B cell (primary cell): ENCODE measurements at regions of chr3 and their contacts with region 1.

Region 1: GRCh38 chr3:16511681-16512434 is 1.6 kb downstream of the RFTN1 start:
- DNase-seq: peak; percentile 95
- ATAC-seq: peak; percentile 66
- H3K4me3 ChIP-seq: peak overlapping the region in 4 of 5 experiments; percentile 82 to 98 (median 91)
- H3K4me3 Mint-ChIP-seq: peak overlapping the region; percentile 74
- H3K27ac ChIP-seq: peak overlapping the region; percentile 89 to 97
- H3K27ac Mint-ChIP-seq: peak overlapping the region; percentile 71
- H3K4me1 ChIP-seq: peaks cover 80 to 87% of the 10 kb centered on the region in 2 donors
- H3K4me1 Mint-ChIP-seq: peaks cover 82% of the 10 kb centered on the region
- H3K27me3 ChIP-seq: no peaks in the 10 kb centered on the region
- H3K27me3 Mint-ChIP-seq: no peaks in the 10 kb centered on the region
- CTCF ChIP-seq: no peak

Region 2: GRCh38 chr3:15797642-15798303 is 714.1 kb before region 1 on chr3 and contains the start of gene ANKRD28:
- CTCF ChIA-PET with region 1: no interaction called
- POLR2A ChIA-PET with region 1: no interaction called
- intact Hi-C with region 1: loop called (anchors 2 kb)
- DNase-seq: peak; percentile 57
- ATAC-seq: no peak
- H3K4me3 ChIP-seq: peak within 1 kb of the TSS in 3 of 5 experiments; percentile 18 to 52 (median 50)
- H3K4me3 Mint-ChIP-seq: peak within 1 kb of the TSS; percentile 70
- H3K27ac ChIP-seq: peak within 1 kb of the TSS; percentile 47 to 91
- H3K27ac Mint-ChIP-seq: peak within 1 kb of the TSS; percentile 64
- H3K4me1 ChIP-seq: peaks cover 33 to 39% of the 10 kb centered on the region in 2 donors
- H3K4me1 Mint-ChIP-seq: peaks cover 68% of the 10 kb centered on the region
- H3K27me3 ChIP-seq: no peaks in the 10 kb centered on the region
- H3K27me3 Mint-ChIP-seq: no peaks in the 10 kb centered on the region
- CTCF ChIP-seq: no peak
- total RNA-seq, gene ANKRD28: 37.4 and 45.7 TPM in 2 replicates

Region 3: DNA sequence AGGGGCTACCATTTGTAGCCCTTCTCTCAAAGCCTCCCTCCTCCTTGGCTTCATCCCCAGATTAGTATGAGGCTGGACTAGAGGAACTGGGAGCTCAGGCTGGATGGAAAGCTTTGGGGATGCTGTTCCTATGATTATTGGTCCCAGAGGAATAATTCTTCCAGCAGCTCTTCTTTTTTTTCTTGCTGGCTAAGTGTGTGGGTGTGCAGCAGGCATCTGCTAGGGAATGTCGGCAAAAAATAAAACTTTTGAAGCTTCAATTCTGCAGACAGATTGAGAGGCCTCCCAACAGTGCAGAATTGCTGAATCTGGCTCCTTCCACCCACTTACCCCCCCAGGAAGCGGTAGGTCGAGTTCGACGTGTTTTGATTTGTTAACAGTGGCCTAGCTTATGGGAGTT is 575.5 kb before region 1 on chr3:
- CTCF ChIA-PET with region 1: no interaction called
- POLR2A ChIA-PET with region 1: no interaction called
- intact Hi-C with region 1: no loop called
- DNase-seq: no peak
- ATAC-seq: no peak
- H3K4me3 ChIP-seq: no peak overlapping the region
- H3K4me3 Mint-ChIP-seq: no peak overlapping the region
- H3K27ac ChIP-seq: no peak overlapping the region
- H3K27ac Mint-ChIP-seq: no peak overlapping the region
- H3K4me1 ChIP-seq: no peaks in the 10 kb centered on the region
- H3K4me1 Mint-ChIP-seq: no peaks in the 10 kb centered on the region
- H3K27me3 ChIP-seq: no peaks in the 10 kb centered on the region
- H3K27me3 Mint-ChIP-seq: peaks cover 3% of the 10 kb centered on the region
- CTCF ChIP-seq: no peak

Region 4: GRCh38 chr3:16370872-16371740 is 140.8 kb before region 1 on chr3:
- CTCF ChIA-PET with region 1: interaction called, 3 read pairs
- POLR2A ChIA-PET with region 1: interaction called, 6 read pairs
- intact Hi-C with region 1: loop called (anchors 1 kb)
- DNase-seq: peak; percentile 77
- ATAC-seq: peak; percentile 53
- H3K4me3 ChIP-seq: peak overlapping the region in 1 of 5 experiments; percentile 15
- H3K4me3 Mint-ChIP-seq: peak overlapping the region; percentile 66
- H3K27ac ChIP-seq: peak overlapping the region; percentile 62 to 87
- H3K27ac Mint-ChIP-seq: peak overlapping the region; percentile 91
- H3K4me1 ChIP-seq: peaks cover 75 to 77% of the 10 kb centered on the region in 2 donors
- H3K4me1 Mint-ChIP-seq: peaks cover 73% of the 10 kb centered on the region
- H3K27me3 ChIP-seq: no peaks in the 10 kb centered on the region
- H3K27me3 Mint-ChIP-seq: no peaks in the 10 kb centered on the region
- CTCF ChIP-seq: no peak

Region 5: DNA sequence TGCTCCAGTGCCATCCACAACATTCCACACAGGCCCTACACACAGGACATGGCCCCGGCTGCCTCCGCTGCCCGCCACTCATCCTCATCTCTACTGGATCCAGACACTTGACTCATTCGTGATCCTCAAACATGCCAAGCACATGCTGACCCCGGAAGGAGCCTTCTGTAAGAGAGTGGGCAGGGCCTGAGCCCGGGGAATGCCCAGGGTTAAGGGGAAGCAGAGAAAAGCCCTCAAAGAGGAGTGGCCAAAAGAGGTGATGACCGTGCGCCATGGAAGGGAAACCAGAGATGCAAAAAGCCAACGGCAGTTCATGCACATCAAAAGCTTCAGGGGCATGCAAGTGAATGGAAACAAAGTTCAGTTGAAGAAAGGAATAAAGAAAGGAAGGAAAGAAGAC is 44.5 kb before region 1 on chr3:
- CTCF ChIA-PET with region 1: interaction called, 3 read pairs
- POLR2A ChIA-PET with region 1: no interaction called
- intact Hi-C with region 1: loop called (anchors 5 kb)
- DNase-seq: peak; percentile 84
- ATAC-seq: peak; percentile 95
- H3K4me3 ChIP-seq: peak overlapping the region in 2 of 5 experiments; percentile 20 to 51
- H3K4me3 Mint-ChIP-seq: peak overlapping the region; percentile 82
- H3K27ac ChIP-seq: peak overlapping the region in 1 of 2 donors; percentile 73
- H3K27ac Mint-ChIP-seq: peak overlapping the region; percentile 82
- H3K4me1 ChIP-seq: peaks cover 39 to 46% of the 10 kb centered on the region in 2 donors
- H3K4me1 Mint-ChIP-seq: peaks cover 55% of the 10 kb centered on the region
- H3K27me3 ChIP-seq: no peaks in the 10 kb centered on the region
- H3K27me3 Mint-ChIP-seq: no peaks in the 10 kb centered on the region
- CTCF ChIP-seq: no peak

Region 6: GRCh38 chr3:16496408-16497222 is 15.2 kb before region 1 on chr3:
- CTCF ChIA-PET with region 1: interaction called, 11 read pairs
- POLR2A ChIA-PET with region 1: interaction called, 8 read pairs
- intact Hi-C with region 1: loop called (anchors 2 kb)
- DNase-seq: no peak
- ATAC-seq: peak; percentile 66
- H3K4me3 ChIP-seq: no peak overlapping the region
- H3K4me3 Mint-ChIP-seq: peak overlapping the region; percentile 42
- H3K27ac ChIP-seq: no peak overlapping the region
- H3K27ac Mint-ChIP-seq: peak overlapping the region; percentile 26
- H3K4me1 ChIP-seq: peaks cover 53 to 54% of the 10 kb centered on the region in 2 donors
- H3K4me1 Mint-ChIP-seq: peaks cover 63% of the 10 kb centered on the region
- H3K27me3 ChIP-seq: no peaks in the 10 kb centered on the region
- H3K27me3 Mint-ChIP-seq: no peaks in the 10 kb centered on the region
- CTCF ChIP-seq: no peak

Region 7: DNA sequence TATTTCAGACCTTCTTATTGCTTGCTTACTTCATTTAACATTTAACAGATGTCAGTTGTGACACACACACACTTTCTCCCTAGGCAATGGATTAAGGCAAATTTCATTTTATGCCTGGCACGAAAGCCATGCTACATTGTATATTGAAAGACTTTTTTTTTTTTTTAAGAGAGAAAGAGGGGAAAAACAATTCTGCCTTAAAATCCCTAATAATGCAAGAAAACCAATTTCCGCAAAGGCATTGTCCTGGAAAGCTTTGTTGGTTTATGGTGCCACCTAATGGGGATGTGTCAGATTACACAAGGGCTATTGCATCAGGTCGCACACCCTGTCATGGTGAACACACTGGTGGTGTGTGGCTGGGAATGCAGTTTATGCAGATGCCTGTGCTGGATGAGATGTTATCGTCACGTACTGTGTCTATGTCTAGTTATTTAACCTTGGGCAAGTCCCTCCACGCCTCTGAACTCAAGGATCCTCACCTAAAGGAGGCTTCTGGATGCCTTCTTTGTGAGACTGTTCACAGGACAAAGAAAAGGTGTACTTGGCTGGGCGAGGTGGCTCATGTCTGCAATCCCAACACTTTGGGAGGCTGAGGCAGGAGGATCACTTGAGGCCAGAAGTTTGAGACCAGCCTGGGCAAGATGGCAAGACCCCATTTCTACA is 39.0 kb after region 1 on chr3:
- CTCF ChIA-PET with region 1: interaction called, 18 read pairs
- POLR2A ChIA-PET with region 1: no interaction called
- intact Hi-C with region 1: loop called (anchors 2 kb)
- DNase-seq: peak; percentile 86
- ATAC-seq: peak; percentile 90
- H3K4me3 ChIP-seq: no peak overlapping the region
- H3K4me3 Mint-ChIP-seq: no peak overlapping the region
- H3K27ac ChIP-seq: no peak overlapping the region
- H3K27ac Mint-ChIP-seq: peak overlapping the region; percentile 23
- H3K4me1 ChIP-seq: peaks cover 0 to 3% of the 10 kb centered on the region in 2 donors
- H3K4me1 Mint-ChIP-seq: peaks cover 2% of the 10 kb centered on the region
- H3K27me3 ChIP-seq: no peaks in the 10 kb centered on the region
- H3K27me3 Mint-ChIP-seq: no peaks in the 10 kb centered on the region
- CTCF ChIP-seq: peak; percentile 90

Region 8: GRCh38 chr3:16801698-16802097 is 289.8 kb after region 1 on chr3:
- CTCF ChIA-PET with region 1: no interaction called
- POLR2A ChIA-PET with region 1: no interaction called
- intact Hi-C with region 1: no loop called
- DNase-seq: peak; percentile 55
- ATAC-seq: peak; percentile 52
- H3K4me3 ChIP-seq: no peak overlapping the region
- H3K4me3 Mint-ChIP-seq: peak overlapping the region; percentile 75
- H3K27ac ChIP-seq: peak overlapping the region in 1 of 2 donors; percentile 3
- H3K27ac Mint-ChIP-seq: peak overlapping the region; percentile 92
- H3K4me1 ChIP-seq: peaks cover 42 to 47% of the 10 kb centered on the region in 2 donors
- H3K4me1 Mint-ChIP-seq: peaks cover 46% of the 10 kb centered on the region
- H3K27me3 ChIP-seq: no peaks in the 10 kb centered on the region
- H3K27me3 Mint-ChIP-seq: no peaks in the 10 kb centered on the region
- CTCF ChIP-seq: no peak